Mammary epithelial cell (primary cell): ENCODE measurements at regions of chr12 and their contacts with region 1.

Region 1: GRCh38 chr12:11553871-11554533 is 95.5 kb upstream of the ETV6 start:
- DNase-seq: peak; percentile 49
- H3K4me3 ChIP-seq: no peak overlapping the region
- H3K27ac ChIP-seq: no peak overlapping the region
- H3K4me1 ChIP-seq: no peaks in the 10 kb centered on the region
- H3K27me3 ChIP-seq: no peaks in the 10 kb centered on the region
- CTCF ChIP-seq: peak; percentile 52 to 71

Region 2: GRCh38 chr12:11321980-11322379 is 232.0 kb before region 1 on chr12:
- CTCF ChIA-PET with region 1: no interaction called
- dilution Hi-C with region 1: no loop called
- in situ Hi-C with region 1: no loop called
- intact Hi-C with region 1: no loop called
- DNase-seq: no peak
- H3K4me3 ChIP-seq: no peak overlapping the region
- H3K27ac ChIP-seq: no peak overlapping the region
- H3K4me1 ChIP-seq: peaks cover 5% of the 10 kb centered on the region
- H3K27me3 ChIP-seq: no peaks in the 10 kb centered on the region
- CTCF ChIP-seq: no peak

Region 3: DNA sequence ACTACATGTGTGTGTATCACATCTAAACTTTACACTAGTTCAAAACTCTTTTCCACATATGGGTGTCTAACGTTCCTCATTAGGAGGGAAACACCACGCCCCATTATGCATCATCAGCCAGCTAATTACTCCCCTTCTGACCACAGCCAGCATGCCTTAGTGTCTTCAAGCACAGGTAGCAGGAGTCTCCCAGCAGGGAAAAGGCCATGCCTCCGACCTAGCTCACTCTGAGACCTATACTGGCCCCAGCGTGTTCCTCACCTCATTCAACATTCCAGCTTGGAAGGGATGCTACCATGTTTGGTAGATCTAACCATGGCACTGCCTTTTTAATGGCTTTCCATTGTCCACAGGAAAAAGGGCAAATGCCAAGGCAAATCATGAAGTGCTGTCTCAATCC is 92.6 kb before region 1 on chr12:
- CTCF ChIA-PET with region 1: no interaction called
- dilution Hi-C with region 1: no loop called
- in situ Hi-C with region 1: no loop called
- intact Hi-C with region 1: no loop called
- DNase-seq: peak; percentile 20
- H3K4me3 ChIP-seq: no peak overlapping the region
- H3K27ac ChIP-seq: no peak overlapping the region
- H3K4me1 ChIP-seq: peaks cover 15% of the 10 kb centered on the region
- H3K27me3 ChIP-seq: no peaks in the 10 kb centered on the region
- CTCF ChIP-seq: no peak

Region 4: DNA sequence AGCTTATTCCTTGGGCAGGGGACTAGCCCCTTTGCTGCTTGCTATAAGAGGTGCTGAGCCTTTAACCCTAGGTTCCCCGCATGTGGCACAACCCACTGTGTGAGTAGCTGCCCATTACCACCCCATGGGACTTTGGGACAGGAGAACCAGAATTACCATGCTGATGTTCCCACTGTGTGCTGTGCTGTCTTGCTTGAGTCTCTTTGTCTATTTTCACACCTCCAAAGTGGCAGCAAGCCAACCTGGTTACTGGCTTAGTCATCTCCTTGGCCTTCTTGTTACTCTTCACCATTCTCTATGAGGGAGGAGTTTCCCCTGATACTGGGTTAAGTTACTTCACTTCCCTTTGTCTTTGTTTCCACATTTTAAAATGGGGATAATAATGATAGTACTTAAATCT is 22.1 kb after region 1 on chr12:
- CTCF ChIA-PET with region 1: no interaction called
- dilution Hi-C with region 1: no loop called
- in situ Hi-C with region 1: no loop called
- intact Hi-C with region 1: loop called (anchors 1 kb)
- DNase-seq: peak; percentile 94
- H3K4me3 ChIP-seq: no peak overlapping the region
- H3K27ac ChIP-seq: peak overlapping the region; percentile 53
- H3K4me1 ChIP-seq: peaks cover 29% of the 10 kb centered on the region
- H3K27me3 ChIP-seq: no peaks in the 10 kb centered on the region
- CTCF ChIP-seq: no peak

Region 5: GRCh38 chr12:12024911-12025682 is 471.1 kb after region 1 on chr12:
- CTCF ChIA-PET with region 1: no interaction called
- dilution Hi-C with region 1: no loop called
- in situ Hi-C with region 1: loop called (anchors 10 kb)
- intact Hi-C with region 1: no loop called
- DNase-seq: no peak
- H3K4me3 ChIP-seq: no peak overlapping the region
- H3K27ac ChIP-seq: no peak overlapping the region
- H3K4me1 ChIP-seq: no peaks in the 10 kb centered on the region
- H3K27me3 ChIP-seq: no peaks in the 10 kb centered on the region
- CTCF ChIP-seq: no peak

Region 6: GRCh38 chr12:12334367-12335040 is 780.5 kb after region 1 on chr12:
- CTCF ChIA-PET with region 1: no interaction called
- dilution Hi-C with region 1: no loop called
- in situ Hi-C with region 1: loop called in 1 of 2 experiments (anchors 25 kb)
- intact Hi-C with region 1: loop called (anchors 10 kb)
- DNase-seq: peak; percentile 25
- H3K4me3 ChIP-seq: no peak overlapping the region
- H3K27ac ChIP-seq: no peak overlapping the region
- H3K4me1 ChIP-seq: peaks cover 26% of the 10 kb centered on the region
- H3K27me3 ChIP-seq: no peaks in the 10 kb centered on the region
- CTCF ChIP-seq: peak; percentile 80 to 81

Region 7: DNA sequence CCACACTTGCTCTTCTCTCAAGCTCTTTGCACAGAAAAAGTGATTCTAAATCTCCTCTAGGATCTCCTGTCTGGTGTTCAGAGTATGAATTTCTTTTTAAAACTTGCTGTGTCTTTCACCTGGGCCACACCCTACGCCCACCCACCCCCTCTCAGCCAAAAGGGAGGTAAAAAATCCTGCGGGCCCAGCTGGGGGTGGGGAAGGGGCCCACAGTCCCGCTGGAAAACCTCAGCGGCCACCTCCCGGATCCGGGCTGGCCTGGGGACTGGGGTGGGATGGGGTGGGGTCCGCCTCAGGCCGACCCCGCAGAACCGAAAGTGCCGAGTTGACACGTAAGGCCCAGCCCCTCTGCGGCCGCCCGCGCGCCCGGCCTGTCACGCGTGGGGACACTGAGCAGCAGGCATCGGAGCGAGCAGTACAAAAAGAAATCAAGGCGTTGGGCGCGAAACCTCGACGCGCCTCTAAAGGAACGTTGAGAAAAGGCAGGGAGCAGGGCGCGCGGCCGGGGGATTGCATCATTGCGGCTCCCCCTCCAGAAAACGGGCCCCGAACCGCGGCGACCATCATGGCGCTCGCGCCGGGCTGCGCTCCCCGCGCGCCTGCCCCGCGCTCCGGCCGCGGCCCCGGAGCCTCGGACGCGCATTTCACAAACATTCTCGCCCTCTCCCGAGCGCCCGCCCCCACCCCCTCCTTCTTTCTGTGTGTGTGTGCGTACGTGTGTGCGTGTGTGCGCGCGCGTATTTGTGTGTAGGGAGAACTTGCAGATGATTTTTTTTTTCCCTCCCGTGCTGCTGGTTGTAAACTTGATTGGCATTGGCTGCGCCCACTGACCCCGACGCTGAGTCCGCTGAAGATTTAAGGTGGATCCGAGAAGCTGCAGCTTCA is 1170.9 kb after region 1 on chr12:
- CTCF ChIA-PET with region 1: no interaction called
- dilution Hi-C with region 1: no loop called
- in situ Hi-C with region 1: loop called in 1 of 2 experiments (anchors 25 kb)
- intact Hi-C with region 1: no loop called
- DNase-seq: peak; percentile 97
- H3K4me3 ChIP-seq: peak overlapping the region; percentile 86 to 95 (median 93)
- H3K27ac ChIP-seq: peak overlapping the region; percentile 94
- H3K4me1 ChIP-seq: peaks cover 34% of the 10 kb centered on the region
- H3K27me3 ChIP-seq: no peaks in the 10 kb centered on the region
- CTCF ChIP-seq: no peak